Activated T-helper 1 cell treated with anti-CD3 and anti-CD28 coated beads, Interleukin-12 subunit alpha, Interleukin-12 subunit beta, Interleukin-2, Interleukin-4 antibody, amounts not matched to agents 30 ng/mL and 10 ng/mL and 1 ng/mL, durations not matched to agents 14 hours and 24 hours and 36 hours (primary cell): ENCODE measurements at regions of chr3 and their contacts with region 1.

Region 1: GRCh38 chr3:49120438-49121131 is at the start of gene USP19:
- DNase-seq: peak; percentile 94
- H3K4me3 Mint-ChIP-seq: peak within 1 kb of the TSS; percentile 90
- H3K27ac Mint-ChIP-seq: peak within 1 kb of the TSS; percentile 88
- H3K4me1 Mint-ChIP-seq: peaks cover 10% of the 10 kb centered on the region
- H3K27me3 Mint-ChIP-seq: peaks cover 1% of the 10 kb centered on the region
- total RNA-seq, gene USP19: 57.7 and 59.7 TPM in 2 replicates

Region 2: GRCh38 chr3:49021813-49022687 is 98.5 kb before region 1 on chr3 and contains the start of gene NDUFAF3:
- intact Hi-C with region 1: loop called (anchors 1 kb)
- DNase-seq: peak; percentile 91
- H3K4me3 Mint-ChIP-seq: peak within 1 kb of the TSS; percentile 91
- H3K27ac Mint-ChIP-seq: peak within 1 kb of the TSS; percentile 99
- H3K4me1 Mint-ChIP-seq: peaks cover 41% of the 10 kb centered on the region
- H3K27me3 Mint-ChIP-seq: no peaks in the 10 kb centered on the region
- total RNA-seq, gene NDUFAF3: 126 and 129 TPM in 2 replicates

Region 3: DNA sequence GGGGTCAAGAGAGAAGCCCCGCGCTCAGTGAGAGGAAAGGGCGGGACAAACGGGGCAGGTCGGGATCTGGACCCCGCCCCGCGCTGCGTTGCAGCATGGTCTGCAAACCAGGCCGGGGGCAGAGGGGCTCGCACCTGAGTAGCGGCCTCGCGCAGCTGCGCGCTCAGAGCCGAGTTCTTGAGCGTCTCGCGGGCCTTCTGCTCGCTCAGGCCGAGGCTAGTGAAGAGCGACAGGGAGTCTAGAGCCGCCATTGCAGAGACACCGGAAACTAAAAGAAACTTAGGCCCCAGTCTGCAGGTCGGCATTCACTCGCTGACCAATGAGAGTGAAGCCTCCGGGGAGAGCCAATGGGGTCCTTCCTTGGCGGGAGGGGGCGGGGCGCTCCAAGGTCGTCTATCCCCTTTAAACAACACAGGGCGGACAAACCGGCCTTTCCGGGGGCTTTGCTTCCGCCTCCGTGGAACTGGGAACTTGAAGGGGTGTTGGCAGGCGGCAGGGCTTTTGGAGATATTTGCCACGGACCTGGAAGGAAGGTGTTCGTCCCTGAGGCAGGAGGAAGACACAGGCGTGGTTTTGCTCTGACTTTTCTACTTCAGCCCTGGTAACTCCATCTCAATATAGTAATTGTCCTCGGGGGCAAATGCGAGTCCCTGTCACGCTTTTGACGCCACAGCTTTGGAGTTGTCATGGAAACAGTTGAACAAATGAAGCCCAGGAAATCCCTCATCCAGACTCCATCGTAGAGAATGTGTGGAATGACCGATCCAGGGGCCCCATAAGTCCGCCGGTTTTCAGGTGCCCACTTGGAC is 15.9 kb before region 1 on chr3 and contains the start of gene QARS1:
- intact Hi-C with region 1: loop called (anchors 1 kb)
- DNase-seq: peak; percentile 87
- H3K4me3 Mint-ChIP-seq: peak within 1 kb of the TSS; percentile 98
- H3K27ac Mint-ChIP-seq: peak within 1 kb of the TSS; percentile 94
- H3K4me1 Mint-ChIP-seq: peaks cover 27% of the 10 kb centered on the region
- H3K27me3 Mint-ChIP-seq: no peaks in the 10 kb centered on the region
- total RNA-seq, gene QARS1: 185 and 200 TPM in 2 replicates

Region 4: DNA sequence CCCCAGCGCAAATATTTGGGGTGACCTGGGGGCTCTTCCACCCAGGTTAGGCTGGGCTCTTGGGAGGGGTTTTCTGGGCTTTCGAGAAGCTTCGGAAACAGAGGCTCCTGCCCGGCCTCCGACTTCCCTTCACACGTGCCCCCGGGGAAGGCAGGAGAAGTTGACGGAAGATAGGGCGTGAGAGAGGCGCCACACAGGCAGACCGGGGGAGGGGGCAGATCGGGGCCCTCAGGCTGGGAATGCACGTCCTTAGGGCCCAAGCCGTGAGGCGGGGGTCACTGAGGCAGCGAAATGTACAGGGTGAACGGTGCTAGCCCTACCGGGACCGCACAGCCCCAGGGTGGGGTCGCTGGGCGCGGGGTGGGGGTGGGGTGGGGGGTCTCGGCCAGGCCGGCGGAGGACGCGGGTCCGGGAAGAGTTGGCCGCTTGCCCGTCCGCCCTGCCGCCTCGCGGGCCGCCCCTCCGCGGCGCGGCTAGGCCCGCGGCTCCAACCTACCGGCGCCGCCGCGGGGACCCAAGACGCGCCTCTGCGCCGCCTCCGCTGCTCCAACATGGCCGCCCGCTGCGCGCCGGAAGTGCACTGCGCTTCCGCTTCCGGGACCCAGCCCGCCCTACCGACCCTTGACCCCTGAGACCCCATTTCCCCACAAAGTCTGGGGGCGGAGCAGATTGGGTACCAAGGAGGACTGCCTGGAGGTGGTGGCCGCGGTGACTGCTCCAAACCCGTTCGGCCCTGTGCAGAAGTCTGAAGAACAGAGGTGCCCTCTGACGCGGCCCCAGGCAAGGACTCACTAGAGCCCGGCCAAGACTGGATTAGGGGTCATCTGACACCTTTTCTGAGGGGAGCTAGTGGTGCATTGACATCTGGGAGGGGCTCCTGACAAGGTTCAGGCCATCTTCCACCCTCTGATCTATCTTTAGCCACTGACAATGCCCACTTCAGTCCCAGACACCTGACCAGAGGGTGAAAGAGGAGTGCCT is 45.5 kb after region 1 on chr3 and contains the start of gene CCDC71:
- intact Hi-C with region 1: loop called (anchors 1 kb)
- DNase-seq: peak; percentile 71
- H3K4me3 Mint-ChIP-seq: peak within 1 kb of the TSS; percentile 97
- H3K27ac Mint-ChIP-seq: peak within 1 kb of the TSS; percentile 88
- H3K4me1 Mint-ChIP-seq: peaks cover 18% of the 10 kb centered on the region
- H3K27me3 Mint-ChIP-seq: no peaks in the 10 kb centered on the region
- total RNA-seq, gene CCDC71: 27.6 and 29.1 TPM in 2 replicates

Region 5: DNA sequence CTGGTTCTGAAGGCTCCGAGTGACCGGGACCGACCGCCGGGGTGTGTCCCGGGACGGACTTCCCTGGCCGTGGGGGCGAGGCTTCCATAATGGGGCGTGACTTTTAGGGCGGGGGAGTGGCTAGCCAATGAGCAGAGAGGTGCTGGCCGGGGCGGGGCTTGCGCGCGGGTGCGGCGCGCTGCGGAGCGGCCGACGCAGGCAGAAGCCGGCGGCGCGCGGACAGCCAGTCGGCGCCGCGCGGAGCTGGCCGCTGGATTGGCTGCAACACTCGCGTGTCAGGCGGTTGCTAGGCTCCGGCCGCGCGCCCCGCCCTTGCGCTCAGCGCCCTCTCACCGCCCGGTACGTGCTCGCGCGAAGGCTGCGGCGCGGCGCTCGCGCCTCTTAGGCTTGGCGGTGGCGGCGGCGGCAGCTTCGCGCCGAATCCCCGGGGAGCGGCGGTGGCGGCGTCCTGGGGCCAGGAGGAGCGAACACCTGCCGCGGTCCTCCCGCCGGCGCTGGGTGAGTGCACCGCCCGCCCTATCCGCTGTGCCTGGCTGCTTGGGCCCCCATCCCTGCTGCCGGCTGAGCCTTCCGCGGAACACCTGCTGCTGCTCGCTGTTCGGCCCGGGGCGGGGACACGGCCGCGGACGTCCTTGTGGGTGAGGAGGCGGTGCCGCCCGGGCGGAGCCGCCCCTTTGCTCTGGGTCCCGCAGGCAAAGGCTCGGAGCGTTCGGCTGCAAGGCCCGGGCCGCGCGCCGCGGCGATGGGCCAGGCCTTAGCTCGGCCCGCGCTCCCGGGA is 349.5 kb after region 1 on chr3 and contains the start of gene DAG1:
- intact Hi-C with region 1: loop called (anchors 1 kb)
- DNase-seq: peak; percentile 96
- H3K4me3 Mint-ChIP-seq: peak within 1 kb of the TSS; percentile 92
- H3K27ac Mint-ChIP-seq: peak within 1 kb of the TSS; percentile 88
- H3K4me1 Mint-ChIP-seq: peaks cover 23% of the 10 kb centered on the region
- H3K27me3 Mint-ChIP-seq: no peaks in the 10 kb centered on the region
- total RNA-seq, gene DAG1: 20.5 and 23.7 TPM in 2 replicates